Prostate gland (tissue), 2 donors: ENCODE measurements at regions of chr16 and their contacts with region 1.

Region 1: DNA sequence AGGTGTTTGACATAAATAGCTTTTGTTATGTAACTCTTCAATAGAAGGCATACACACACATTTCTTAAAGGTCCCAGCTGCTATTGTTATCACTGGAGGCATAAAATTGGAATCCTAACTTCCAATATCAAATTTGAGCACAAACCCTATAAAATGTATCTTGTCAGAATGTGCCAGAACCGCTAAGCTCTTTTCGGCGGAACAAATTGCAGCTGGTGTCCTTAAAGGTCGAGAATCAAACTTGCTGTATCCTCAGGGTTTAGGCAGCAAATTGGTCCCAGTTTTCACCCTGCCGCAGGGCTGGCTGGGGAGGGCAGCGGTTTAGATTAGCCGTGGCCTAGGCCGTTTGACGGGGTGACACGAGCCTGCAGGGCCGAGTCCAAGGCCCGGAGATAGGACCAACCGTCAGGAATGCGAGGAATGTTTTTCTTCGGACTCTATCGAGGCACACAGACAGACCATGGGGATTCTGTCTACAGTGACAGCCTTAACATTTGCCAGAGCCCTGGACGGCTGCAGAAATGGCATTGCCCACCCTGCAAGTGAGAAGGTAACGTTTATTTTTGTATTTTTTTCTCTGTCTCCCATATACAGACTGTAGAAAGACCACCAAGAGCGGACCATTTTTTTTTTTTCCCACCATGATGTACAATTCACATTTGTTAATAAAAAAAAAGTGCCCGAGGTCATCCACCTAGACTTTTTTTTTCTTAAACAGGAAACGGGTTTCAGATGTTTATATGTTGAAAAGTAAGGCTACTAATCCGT is 297.1 kb downstream of the IRF8 start:
- DNase-seq: no peak
- H3K4me3 ChIP-seq: peak overlapping the region in 1 of 2 donors; percentile 2
- H3K27ac ChIP-seq: peak overlapping the region; percentile 56 to 67
- H3K4me1 ChIP-seq: no peaks in the 10 kb centered on the region
- H3K27me3 ChIP-seq: peaks cover 20% of the 10 kb centered on the region
- CTCF ChIP-seq: no peak
- POLR2A ChIP-seq: no peak

Region 2: DNA sequence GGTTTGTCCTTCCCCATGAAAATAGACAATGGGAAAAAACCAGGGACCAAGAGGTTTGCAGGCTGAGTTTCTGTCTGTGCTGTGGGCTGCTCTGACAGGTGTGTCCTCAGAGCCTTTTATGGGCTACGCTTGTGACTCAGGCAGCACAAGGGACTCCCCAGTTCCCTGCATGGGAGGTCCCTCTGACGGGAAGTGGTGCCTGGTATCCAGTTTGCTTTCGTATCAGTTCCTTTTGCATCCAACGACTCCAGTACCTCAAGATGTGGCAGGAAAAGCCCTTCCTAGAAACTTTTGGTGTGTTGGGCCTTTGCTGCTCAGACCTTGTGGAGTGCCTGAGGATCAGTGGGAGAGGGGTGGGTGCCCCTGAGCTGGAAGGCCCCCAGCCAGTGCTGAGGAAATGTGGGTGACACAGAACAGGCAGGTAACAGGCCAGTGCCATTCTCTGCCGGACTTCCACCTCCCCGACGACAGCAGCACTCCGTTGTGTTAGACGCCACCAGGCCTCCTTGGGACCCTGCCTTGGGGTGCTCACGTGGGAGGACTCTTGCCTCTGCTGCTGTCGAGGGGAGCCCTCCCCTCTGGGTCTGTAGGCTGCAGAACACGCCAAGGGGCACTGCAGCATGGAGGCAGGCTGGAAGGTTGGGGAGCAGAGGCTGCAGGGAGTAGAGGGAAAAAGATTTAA is 335.5 kb before region 1 on chr16:
- intact Hi-C with region 1: no loop called
- DNase-seq: no peak
- H3K4me3 ChIP-seq: no peak overlapping the region
- H3K27ac ChIP-seq: no peak overlapping the region
- H3K4me1 ChIP-seq: no peaks in the 10 kb centered on the region
- H3K27me3 ChIP-seq: no peaks in the 10 kb centered on the region
- CTCF ChIP-seq: no peak
- POLR2A ChIP-seq: no peak

Region 3: DNA sequence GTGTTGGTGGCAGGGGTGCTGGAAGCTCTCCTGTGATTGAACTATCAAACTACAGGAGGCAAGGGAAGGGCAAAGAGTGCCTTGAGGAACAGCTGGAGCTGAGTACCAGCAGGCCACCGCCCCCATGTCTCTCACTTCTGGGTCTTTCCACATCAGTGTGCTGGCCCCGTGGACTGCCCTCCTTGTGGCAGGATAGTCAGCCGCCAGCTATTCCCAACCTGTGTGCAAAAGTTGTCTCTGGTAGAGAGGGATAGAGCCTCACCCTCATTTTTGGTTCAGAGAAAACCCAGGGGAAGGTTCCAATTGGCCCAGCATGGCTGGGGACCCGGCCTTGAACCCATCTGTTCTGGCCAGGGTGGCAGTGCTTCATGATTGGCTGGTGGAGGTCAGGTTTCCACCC is 85.3 kb before region 1 on chr16:
- intact Hi-C with region 1: loop called (anchors 5 kb)
- DNase-seq: no peak
- H3K4me3 ChIP-seq: no peak overlapping the region
- H3K27ac ChIP-seq: no peak overlapping the region
- H3K4me1 ChIP-seq: no peaks in the 10 kb centered on the region
- H3K27me3 ChIP-seq: no peaks in the 10 kb centered on the region
- CTCF ChIP-seq: no peak
- POLR2A ChIP-seq: no peak

Region 4: DNA sequence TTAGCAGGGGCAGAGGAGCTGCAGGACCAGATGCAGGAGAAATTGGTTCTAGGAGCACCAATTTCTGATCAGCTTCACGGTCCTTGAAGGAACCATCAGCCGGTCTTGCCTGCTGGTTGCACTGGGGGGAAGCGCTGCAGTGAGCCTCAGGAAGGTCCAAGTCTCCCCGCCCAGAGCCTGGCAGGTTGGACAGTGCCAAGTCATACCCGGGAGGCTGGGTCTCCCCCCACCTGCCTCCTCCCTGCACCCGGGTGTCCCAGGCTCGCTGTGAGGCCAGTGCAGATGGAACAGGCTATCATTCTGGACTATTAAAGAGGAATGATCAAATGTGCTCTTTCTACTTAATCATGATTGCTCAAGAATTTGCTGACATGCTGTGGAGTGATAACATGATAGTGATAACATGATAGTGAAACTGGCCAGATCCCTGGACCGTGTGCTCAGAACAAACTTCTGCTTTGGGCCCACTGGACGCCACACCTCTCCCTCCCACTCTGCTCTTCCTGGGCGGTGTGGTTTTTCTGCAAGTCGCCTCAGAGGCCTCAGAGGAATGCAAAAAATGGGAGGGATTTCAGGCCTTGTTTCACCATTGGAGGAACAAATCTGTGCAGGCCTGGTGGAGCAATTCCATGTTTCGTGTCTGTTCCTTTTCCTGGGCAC is 61.1 kb before region 1 on chr16:
- intact Hi-C with region 1: no loop called
- DNase-seq: no peak
- H3K4me3 ChIP-seq: no peak overlapping the region
- H3K27ac ChIP-seq: no peak overlapping the region
- H3K4me1 ChIP-seq: no peaks in the 10 kb centered on the region
- H3K27me3 ChIP-seq: no peaks in the 10 kb centered on the region
- CTCF ChIP-seq: no peak
- POLR2A ChIP-seq: no peak

Region 5: GRCh38 chr16:86151239-86151851 is 44.7 kb before region 1 on chr16:
- intact Hi-C with region 1: loop called (anchors 5 kb)
- DNase-seq: no peak
- H3K4me3 ChIP-seq: no peak overlapping the region
- H3K27ac ChIP-seq: peak overlapping the region; percentile 28 to 64
- H3K4me1 ChIP-seq: no peaks in the 10 kb centered on the region
- H3K27me3 ChIP-seq: peaks cover 2% of the 10 kb centered on the region
- CTCF ChIP-seq: no peak
- POLR2A ChIP-seq: no peak

Region 6: GRCh38 chr16:86300746-86301481 is 104.9 kb after region 1 on chr16:
- intact Hi-C with region 1: loop called (anchors 5 kb)
- DNase-seq: no peak
- H3K4me3 ChIP-seq: no peak overlapping the region
- H3K27ac ChIP-seq: peak overlapping the region; percentile 52 to 68
- H3K4me1 ChIP-seq: no peaks in the 10 kb centered on the region
- H3K27me3 ChIP-seq: peaks cover 5% of the 10 kb centered on the region
- CTCF ChIP-seq: no peak
- POLR2A ChIP-seq: no peak

Region 7: GRCh38 chr16:86343027-86343787 is 147.2 kb after region 1 on chr16:
- intact Hi-C with region 1: loop called (anchors 2 kb)
- DNase-seq: peak; percentile 72
- H3K4me3 ChIP-seq: no peak overlapping the region
- H3K27ac ChIP-seq: peak overlapping the region; percentile 73 to 80
- H3K4me1 ChIP-seq: no peaks in the 10 kb centered on the region
- H3K27me3 ChIP-seq: no peaks in the 10 kb centered on the region
- CTCF ChIP-seq: no peak
- POLR2A ChIP-seq: no peak

Region 8: DNA sequence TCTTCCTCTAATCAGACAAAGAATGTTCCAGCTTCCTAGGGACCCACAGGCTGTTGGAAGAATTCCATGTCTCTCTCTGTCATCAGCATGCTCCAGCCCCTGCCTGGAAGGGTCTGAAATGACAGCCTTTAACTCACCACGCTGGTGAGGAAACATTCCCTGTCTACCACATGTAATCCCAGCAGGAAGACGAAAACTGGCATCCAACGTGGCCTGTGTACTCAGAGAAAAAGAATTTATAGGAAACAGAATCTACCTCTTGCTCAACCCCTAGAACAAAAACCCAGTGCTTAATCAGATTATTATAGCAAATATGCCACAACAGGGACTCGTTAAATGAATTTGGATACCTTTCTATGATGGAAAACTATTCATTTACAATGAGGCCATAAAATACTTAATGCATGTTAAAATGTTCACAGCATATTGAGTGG is 167.0 kb after region 1 on chr16:
- intact Hi-C with region 1: loop called (anchors 5 kb)
- DNase-seq: peak; percentile 77
- H3K4me3 ChIP-seq: no peak overlapping the region
- H3K27ac ChIP-seq: peak overlapping the region; percentile 16 to 66
- H3K4me1 ChIP-seq: no peaks in the 10 kb centered on the region
- H3K27me3 ChIP-seq: no peaks in the 10 kb centered on the region
- CTCF ChIP-seq: no peak
- POLR2A ChIP-seq: no peak

Region 9: GRCh38 chr16:86519649-86520316 is 323.7 kb after region 1 on chr16:
- intact Hi-C with region 1: loop called (anchors 2 kb)
- DNase-seq: peak; percentile 32
- H3K4me3 ChIP-seq: no peak overlapping the region
- H3K27ac ChIP-seq: peak overlapping the region in 1 of 2 donors; percentile 35
- H3K4me1 ChIP-seq: no peaks in the 10 kb centered on the region
- H3K27me3 ChIP-seq: peaks cover 30% of the 10 kb centered on the region
- CTCF ChIP-seq: peak; percentile 73 to 90 (median 84)
- POLR2A ChIP-seq: no peak